Heart left ventricle (tissue), 16 donors: ENCODE measurements at regions of chr6 and their contacts with region 1.

Region 1: GRCh38 chr6:131107151-131107550 is 28.1 kb upstream of the AKAP7 start:
- DNase-seq: no peak
- ATAC-seq: peak in 3 of 4 donors; percentile 36 to 65 (median 65)
- H3K4me3 ChIP-seq: no peak overlapping the region
- H3K27ac ChIP-seq: no peak overlapping the region
- H3K4me1 ChIP-seq: no peaks in the 10 kb centered on the region
- H3K27me3 ChIP-seq: no peaks in the 10 kb centered on the region
- CTCF ChIP-seq: no peak
- POLR2A ChIP-seq: no peak

Region 2: GRCh38 chr6:131073577-131073976 is 33.6 kb before region 1 on chr6:
- intact Hi-C with region 1: loop called in 2 of 10 experiments (anchors 5 to 10 kb)
- DNase-seq: no peak
- ATAC-seq: no peak
- H3K4me3 ChIP-seq: no peak overlapping the region
- H3K27ac ChIP-seq: no peak overlapping the region
- H3K4me1 ChIP-seq: no peaks in the 10 kb centered on the region
- H3K27me3 ChIP-seq: no peaks in the 10 kb centered on the region
- CTCF ChIP-seq: no peak
- POLR2A ChIP-seq: no peak

Region 3: DNA sequence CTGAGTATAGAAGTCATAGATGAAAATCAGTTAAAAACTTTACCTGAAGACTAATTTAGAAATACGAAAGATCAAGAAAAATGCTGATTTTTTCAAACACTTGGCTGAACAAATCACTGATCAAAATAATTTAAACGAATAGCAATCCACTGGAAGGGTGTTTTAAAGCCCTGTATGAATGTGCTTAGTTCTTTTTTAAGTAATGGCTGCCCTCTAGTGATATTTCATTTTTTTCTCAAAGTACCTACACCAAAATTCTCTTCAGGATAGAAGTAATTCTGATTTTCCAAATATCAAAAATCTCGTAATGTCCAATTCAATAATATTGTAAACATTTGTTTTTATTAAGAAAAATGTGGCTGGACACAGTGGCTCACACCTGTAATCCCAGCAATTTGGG is 60.6 kb after region 1 on chr6:
- intact Hi-C with region 1: no loop called
- DNase-seq: no peak
- ATAC-seq: no peak
- H3K4me3 ChIP-seq: no peak overlapping the region
- H3K27ac ChIP-seq: no peak overlapping the region
- H3K4me1 ChIP-seq: no peaks in the 10 kb centered on the region
- H3K27me3 ChIP-seq: no peaks in the 10 kb centered on the region
- CTCF ChIP-seq: peak in 4 of 12 donors; percentile 20 to 34 (median 26)
- POLR2A ChIP-seq: no peak